ENCODE measurements at regions of chr9 and their contacts with region 1.

Region 1: DNA sequence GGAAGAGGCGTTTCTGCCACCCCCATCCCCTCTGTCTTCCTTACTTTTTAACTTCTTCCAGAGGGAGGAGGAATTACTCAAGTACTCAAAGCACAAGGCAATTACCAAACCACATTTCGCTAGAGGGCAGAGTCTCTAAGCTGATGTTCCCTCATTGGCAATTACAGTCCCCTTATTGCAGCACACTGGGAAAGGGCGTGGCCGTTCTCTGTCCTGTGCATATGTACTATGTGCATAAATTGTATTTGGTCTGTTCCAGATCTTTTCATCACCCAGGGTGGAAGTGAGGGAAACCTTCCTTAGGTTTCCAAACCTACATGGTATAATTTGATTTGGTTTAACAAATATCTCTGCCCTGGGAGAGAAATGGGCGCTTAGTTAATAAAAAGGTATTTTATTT is 29.8 kb upstream of the ALDOB start:
- DNase-seq: peak; percentile 69 to 70 (median 70)
- H3K4me3 ChIP-seq: no peak overlapping the region
- H3K27ac ChIP-seq: no peak overlapping the region
- H3K4me1 ChIP-seq: peaks cover 0 to 12% (median 0%) of the 10 kb centered on the region in 4 experiments
- H3K27me3 ChIP-seq: peaks cover 0 to 6% (median 0%) of the 10 kb centered on the region in 5 experiments

Region 2: GRCh38 chr9:101418518-101419430 is 46.6 kb before region 1 on chr9:
- CTCF ChIA-PET with region 1: no interaction called
- POLR2A ChIA-PET with region 1: no interaction called
- DNase-seq: no peak
- H3K4me3 ChIP-seq: no peak overlapping the region
- H3K27ac ChIP-seq: no peak overlapping the region
- H3K4me1 ChIP-seq: peaks cover 0 to 3% (median 0%) of the 10 kb centered on the region in 4 experiments
- H3K27me3 ChIP-seq: no peaks in the 10 kb centered on the region

Region 3: DNA sequence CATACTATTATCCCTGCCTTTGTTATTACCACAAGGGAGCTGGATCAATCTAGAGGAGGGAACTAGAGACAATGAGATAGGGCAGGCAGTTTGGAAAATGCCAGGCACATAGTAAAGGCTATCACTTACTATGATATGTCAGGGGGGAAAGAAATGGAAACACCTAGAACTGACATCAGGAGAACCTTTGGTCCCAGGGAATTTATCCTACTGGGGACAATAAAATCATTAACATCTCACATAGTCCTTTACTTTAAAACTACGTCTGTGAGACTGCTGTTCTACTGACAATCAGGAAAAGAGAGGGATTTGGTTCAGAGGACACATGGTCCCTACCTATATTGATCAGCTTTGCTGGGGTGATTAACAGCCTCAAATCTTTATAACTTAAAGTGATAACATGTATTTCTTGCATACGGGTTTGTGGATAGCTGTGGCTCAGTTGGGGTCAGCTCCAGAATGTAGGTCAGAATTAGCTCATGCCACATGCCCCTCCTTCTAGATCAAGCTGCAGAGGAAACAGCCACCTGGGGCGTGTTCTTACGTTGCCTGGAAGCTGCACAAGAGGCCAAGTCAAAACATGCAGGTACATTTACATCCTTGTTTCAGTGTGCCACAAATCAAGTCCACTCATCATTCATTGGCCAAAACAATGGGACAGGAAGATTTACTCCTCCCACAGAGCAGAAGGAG is 14.1 kb after region 1 on chr9:
- CTCF ChIA-PET with region 1: interaction called, 46 read pairs
- POLR2A ChIA-PET with region 1: no interaction called
- DNase-seq: no peak
- H3K4me3 ChIP-seq: no peak overlapping the region
- H3K27ac ChIP-seq: no peak overlapping the region
- H3K4me1 ChIP-seq: peaks cover 0 to 42% (median 1%) of the 10 kb centered on the region in 4 experiments
- H3K27me3 ChIP-seq: peaks cover 0 to 7% (median 0%) of the 10 kb centered on the region in 5 experiments

Region 4: GRCh38 chr9:101486693-101487442 is 21.5 kb after region 1 on chr9:
- CTCF ChIA-PET with region 1: interaction called, 35 read pairs
- POLR2A ChIA-PET with region 1: interaction called, 3 read pairs
- DNase-seq: peak; percentile 73 to 85 (median 84)
- H3K4me3 ChIP-seq: peak overlapping the region; percentile 56 to 96 (median 80)
- H3K27ac ChIP-seq: peak overlapping the region; percentile 51 to 77
- H3K4me1 ChIP-seq: peaks cover 0 to 32% (median 14%) of the 10 kb centered on the region in 4 experiments
- H3K27me3 ChIP-seq: peaks cover 0 to 18% (median 0%) of the 10 kb centered on the region in 5 experiments

Region 5: GRCh38 chr9:101504188-101504587 is 38.8 kb after region 1 on chr9:
- CTCF ChIA-PET with region 1: no interaction called
- POLR2A ChIA-PET with region 1: no interaction called
- DNase-seq: no peak
- H3K4me3 ChIP-seq: no peak overlapping the region
- H3K27ac ChIP-seq: no peak overlapping the region
- H3K4me1 ChIP-seq: no peaks in the 10 kb centered on the region
- H3K27me3 ChIP-seq: peaks cover 0 to 8% (median 0%) of the 10 kb centered on the region in 5 experiments